ENCODE measurements at regions of chr14 and their contacts with region 1.

Region 1: DNA sequence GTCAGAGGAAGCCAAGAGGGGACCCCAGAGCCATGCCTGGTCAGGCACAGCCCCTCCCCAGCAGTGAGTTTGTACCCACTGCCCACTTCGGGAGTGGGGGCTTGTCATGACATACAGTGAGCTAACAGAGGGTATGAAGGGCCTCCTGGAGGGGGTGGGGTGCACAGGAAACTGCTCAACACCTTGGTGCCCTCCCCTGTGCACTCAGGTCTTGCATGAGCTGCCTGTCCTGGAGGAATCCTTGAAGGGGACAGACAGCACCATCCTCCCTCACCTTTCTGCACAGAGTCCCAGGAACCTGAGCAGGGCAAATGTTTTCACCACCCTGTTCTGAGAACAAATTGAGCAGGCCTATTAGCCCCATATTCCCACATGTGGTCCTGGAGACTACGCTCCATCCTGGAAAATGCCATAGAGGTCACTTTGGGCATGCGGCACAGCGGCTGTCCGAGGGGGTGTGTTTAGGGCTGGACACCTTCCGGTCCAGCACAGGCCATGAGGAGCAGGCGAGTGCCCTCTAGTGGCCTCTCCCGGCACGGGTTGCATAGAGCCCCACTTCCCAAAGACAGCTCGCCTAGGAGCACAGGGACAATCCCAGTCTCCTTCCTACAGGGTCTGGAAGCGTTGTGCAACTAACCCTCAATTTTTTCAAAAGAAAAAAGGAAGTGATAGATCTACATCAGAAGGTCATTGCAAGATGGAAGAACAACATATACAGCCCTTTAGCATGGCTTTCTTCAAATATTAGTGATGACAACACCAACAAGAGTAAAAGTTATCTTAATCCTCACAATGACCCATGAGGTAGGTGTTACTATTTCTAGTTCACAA is 31.9 kb upstream of the ZFP36L1 start:
- ATAC-seq: peak; percentile 87 to 100 (median 98)
- H3K4me3 ChIP-seq: no peak overlapping the region
- H3K27ac ChIP-seq: no peak overlapping the region
- H3K4me1 ChIP-seq: no peaks in the 10 kb centered on the region

Region 2: GRCh38 chr14:67934008-67934481 is 890.7 kb before region 1 on chr14:
- in situ Hi-C with region 1: loop called (anchors 10 to 25 kb)
- ATAC-seq: peak; percentile 74 to 93 (median 82)
- H3K4me3 ChIP-seq: no peak overlapping the region
- H3K27ac ChIP-seq: no peak overlapping the region
- H3K4me1 ChIP-seq: peaks cover 0 to 7% of the 10 kb centered on the region in 2 donors